MCF 10A (cell line): ENCODE measurements at regions of chr6 and their contacts with region 1.

Region 1: GRCh38 chr6:125153391-125154117 is at the start of gene TPD52L1:
- DNase-seq: peak; percentile 83
- H3K4me3 Mint-ChIP-seq: peak within 1 kb of the TSS; percentile 83
- H3K27ac Mint-ChIP-seq: peak within 1 kb of the TSS; percentile 55
- H3K4me1 Mint-ChIP-seq: peaks cover 23% of the 10 kb centered on the region
- H3K27me3 Mint-ChIP-seq: no peaks in the 10 kb centered on the region
- CTCF ChIP-seq: peak; percentile 73
- total RNA-seq, gene TPD52L1: 69.5 and 92.6 TPM in 2 replicates

Region 2: GRCh38 chr6:124870611-124871459 is 282.7 kb before region 1 on chr6:
- CTCF ChIA-PET with region 1: interaction called, 5 read pairs
- POLR2A ChIA-PET with region 1: no interaction called
- intact Hi-C with region 1: loop called (anchors 1 kb)
- DNase-seq: peak; percentile 57
- H3K4me3 Mint-ChIP-seq: no peak overlapping the region
- H3K27ac Mint-ChIP-seq: no peak overlapping the region
- H3K4me1 Mint-ChIP-seq: no peaks in the 10 kb centered on the region
- H3K27me3 Mint-ChIP-seq: no peaks in the 10 kb centered on the region
- CTCF ChIP-seq: peak; percentile 77

Region 3: GRCh38 chr6:124924333-124924759 is 229.2 kb before region 1 on chr6:
- CTCF ChIA-PET with region 1: no interaction called
- POLR2A ChIA-PET with region 1: no interaction called
- intact Hi-C with region 1: no loop called
- DNase-seq: peak; percentile 12
- H3K4me3 Mint-ChIP-seq: no peak overlapping the region
- H3K27ac Mint-ChIP-seq: no peak overlapping the region
- H3K4me1 Mint-ChIP-seq: peaks cover 7% of the 10 kb centered on the region
- H3K27me3 Mint-ChIP-seq: no peaks in the 10 kb centered on the region
- CTCF ChIP-seq: no peak

Region 4: DNA sequence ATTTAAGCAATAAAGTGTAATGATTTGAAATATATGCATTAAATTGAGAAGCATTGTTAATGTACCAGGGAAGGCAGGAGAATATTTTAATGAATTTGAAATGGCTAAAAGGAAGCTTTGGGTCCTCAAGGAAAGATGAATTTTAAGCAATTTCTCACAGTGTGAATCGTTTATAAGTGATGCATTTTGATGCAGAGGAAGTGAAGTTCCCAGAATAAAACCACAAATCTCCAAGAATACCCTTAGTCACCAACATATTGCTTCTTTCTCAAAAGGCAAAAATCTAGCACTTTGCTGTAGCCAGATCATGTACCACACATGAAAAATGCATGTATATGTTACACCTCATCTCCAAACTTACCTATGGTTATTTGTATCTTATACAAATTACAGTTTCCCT is 11.7 kb after region 1 on chr6:
- CTCF ChIA-PET with region 1: interaction called, 25 read pairs
- POLR2A ChIA-PET with region 1: interaction called, 8 read pairs
- intact Hi-C with region 1: no loop called
- DNase-seq: no peak
- H3K4me3 Mint-ChIP-seq: no peak overlapping the region
- H3K27ac Mint-ChIP-seq: no peak overlapping the region
- H3K4me1 Mint-ChIP-seq: peaks cover 17% of the 10 kb centered on the region
- H3K27me3 Mint-ChIP-seq: no peaks in the 10 kb centered on the region
- CTCF ChIP-seq: no peak

Region 5: DNA sequence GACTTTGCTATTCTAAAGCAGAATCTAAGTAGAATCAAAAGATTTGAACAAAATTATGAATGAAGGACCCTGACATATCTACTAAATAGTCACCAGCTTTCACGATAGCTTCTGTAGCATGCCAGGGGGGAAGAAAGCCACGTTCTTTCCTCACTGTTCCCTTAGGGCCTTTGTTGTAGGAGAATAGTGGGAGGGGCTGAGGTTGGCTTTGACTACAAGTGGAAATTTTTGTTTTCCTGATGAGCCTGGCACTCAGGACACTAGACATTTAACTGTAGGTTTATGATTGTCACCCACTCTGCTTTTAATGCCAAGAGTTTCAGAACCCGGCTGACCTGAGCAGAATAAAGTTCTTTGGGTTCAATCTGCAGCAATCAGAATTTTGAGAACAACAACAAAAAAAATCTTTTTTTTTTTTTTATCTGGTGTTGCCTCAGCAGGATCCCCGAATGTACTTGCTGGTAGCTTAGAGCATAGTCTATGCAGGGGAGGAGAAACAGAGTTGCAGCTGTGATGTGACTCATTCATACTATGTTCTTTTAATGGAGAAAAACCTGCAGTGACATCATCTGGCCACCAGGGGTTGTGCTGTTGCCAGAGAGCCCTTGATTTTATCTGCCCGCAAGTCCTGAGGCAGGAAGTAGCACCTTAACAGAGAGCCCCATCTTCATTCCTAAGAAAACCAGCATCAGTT is 38.5 kb after region 1 on chr6:
- CTCF ChIA-PET with region 1: interaction called, 70 read pairs
- POLR2A ChIA-PET with region 1: interaction called, 6 read pairs
- intact Hi-C with region 1: loop called (anchors 2 kb)
- DNase-seq: peak; percentile 90
- H3K4me3 Mint-ChIP-seq: no peak overlapping the region
- H3K27ac Mint-ChIP-seq: peak overlapping the region; percentile 77
- H3K4me1 Mint-ChIP-seq: peaks cover 30% of the 10 kb centered on the region
- H3K27me3 Mint-ChIP-seq: no peaks in the 10 kb centered on the region
- CTCF ChIP-seq: peak; percentile 75

Region 6: GRCh38 chr6:125252891-125253290 is 99.3 kb after region 1 on chr6:
- CTCF ChIA-PET with region 1: interaction called, 12 read pairs
- POLR2A ChIA-PET with region 1: interaction called, 5 read pairs
- intact Hi-C with region 1: no loop called
- DNase-seq: no peak
- H3K4me3 Mint-ChIP-seq: no peak overlapping the region
- H3K27ac Mint-ChIP-seq: no peak overlapping the region
- H3K4me1 Mint-ChIP-seq: peaks cover 23% of the 10 kb centered on the region
- H3K27me3 Mint-ChIP-seq: no peaks in the 10 kb centered on the region
- CTCF ChIP-seq: no peak

Region 7: GRCh38 chr6:125301435-125302391 is 148.2 kb after region 1 on chr6 and contains the start of gene HDDC2:
- CTCF ChIA-PET with region 1: interaction called, 25 read pairs
- POLR2A ChIA-PET with region 1: interaction called, 20 read pairs
- intact Hi-C with region 1: loop called (anchors 1 kb)
- DNase-seq: peak; percentile 60
- H3K4me3 Mint-ChIP-seq: peak within 1 kb of the TSS; percentile 79
- H3K27ac Mint-ChIP-seq: peak within 1 kb of the TSS; percentile 33
- H3K4me1 Mint-ChIP-seq: peaks cover 31% of the 10 kb centered on the region
- H3K27me3 Mint-ChIP-seq: peaks cover 7% of the 10 kb centered on the region
- CTCF ChIP-seq: no peak
- total RNA-seq, gene HDDC2: 141 and 167 TPM in 2 replicates

Region 8: GRCh38 chr6:125764121-125764671 is 610.6 kb after region 1 on chr6:
- CTCF ChIA-PET with region 1: interaction called, 3 read pairs
- POLR2A ChIA-PET with region 1: no interaction called
- intact Hi-C with region 1: loop called (anchors 5 kb)
- DNase-seq: no peak
- H3K4me3 Mint-ChIP-seq: no peak overlapping the region
- H3K27ac Mint-ChIP-seq: no peak overlapping the region
- H3K4me1 Mint-ChIP-seq: no peaks in the 10 kb centered on the region
- H3K27me3 Mint-ChIP-seq: peaks cover 94% of the 10 kb centered on the region
- CTCF ChIP-seq: no peak